Sigmoid colon (tissue), 7 donors: ENCODE measurements at regions of chr9 and their contacts with region 1.

Region 1: DNA sequence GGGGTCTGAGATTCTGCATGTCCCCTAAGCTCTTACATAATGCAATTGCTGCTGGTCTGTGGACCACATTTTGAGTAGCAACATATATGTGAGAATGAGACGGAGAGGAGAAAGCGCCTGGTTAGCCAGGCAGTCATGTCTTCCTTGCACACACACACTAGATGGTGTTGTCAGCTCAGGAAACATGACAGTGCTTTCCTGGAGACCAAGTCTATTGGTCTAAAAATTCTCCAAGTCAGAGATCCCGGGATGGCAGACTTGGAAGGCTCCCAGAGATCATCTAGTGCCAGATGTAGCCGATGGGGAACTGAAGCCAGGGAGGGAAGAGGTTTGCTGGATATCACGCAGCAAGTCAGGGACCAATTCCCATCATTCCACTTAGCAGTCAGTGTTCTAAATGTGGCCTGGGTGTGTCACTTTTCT is 53.4 kb downstream of the GALNT12 start:
- DNase-seq: peak; percentile 92
- H3K4me3 ChIP-seq: no peak overlapping the region
- H3K27ac ChIP-seq: peak overlapping the region; percentile 12 to 72 (median 66)
- H3K4me1 ChIP-seq: peaks cover 0 to 29% (median 12%) of the 10 kb centered on the region in 4 donors
- H3K27me3 ChIP-seq: no peaks in the 10 kb centered on the region
- CTCF ChIP-seq: peak; percentile 54 to 63 (median 60)
- EP300 ChIP-seq: peak in 2 of 4 donors; percentile 29 to 54
- POLR2A ChIP-seq: no peak

Region 2: GRCh38 chr9:98944057-98944733 is 83.3 kb after region 1 on chr9:
- intact Hi-C with region 1: loop called (anchors 2 kb)
- DNase-seq: peak; percentile 80
- H3K4me3 ChIP-seq: peak overlapping the region; percentile 64 to 78 (median 70)
- H3K27ac ChIP-seq: peak overlapping the region; percentile 85 to 89 (median 87)
- H3K4me1 ChIP-seq: peaks cover 0 to 42% (median 34%) of the 10 kb centered on the region in 4 donors
- H3K27me3 ChIP-seq: no peaks in the 10 kb centered on the region
- CTCF ChIP-seq: no peak
- EP300 ChIP-seq: no peak
- POLR2A ChIP-seq: peak in 1 of 2 donors; percentile 13